ENCODE measurements at regions of chr1 and their contacts with region 1.

Region 1: GRCh38 chr1:112715264-112716053 is at the start of gene PPM1J:
- H3K4me3 ChIP-seq: peak within 1 kb of the TSS; percentile 57
- H3K27ac ChIP-seq: no peak within 1 kb of the TSS; the same call in 1 of the 2 replicates
- H3K4me1 ChIP-seq: no peaks in the 10 kb centered on the region
- CTCF ChIP-seq: no peak

Region 2: GRCh38 chr1:112395821-112396652 is 319.4 kb before region 1 on chr1 and contains the start of gene CTTNBP2NL:
- CTCF ChIA-PET with region 1: interaction called, 18 read pairs
- POLR2A ChIA-PET with region 1: interaction called, 4 read pairs
- H3K4me3 ChIP-seq: peak within 1 kb of the TSS; percentile 71
- H3K27ac ChIP-seq: peak within 1 kb of the TSS; percentile 8; the same call in 1 of the 2 replicates
- H3K4me1 ChIP-seq: peaks cover 16% of the 10 kb centered on the region
- CTCF ChIP-seq: no peak

Region 3: DNA sequence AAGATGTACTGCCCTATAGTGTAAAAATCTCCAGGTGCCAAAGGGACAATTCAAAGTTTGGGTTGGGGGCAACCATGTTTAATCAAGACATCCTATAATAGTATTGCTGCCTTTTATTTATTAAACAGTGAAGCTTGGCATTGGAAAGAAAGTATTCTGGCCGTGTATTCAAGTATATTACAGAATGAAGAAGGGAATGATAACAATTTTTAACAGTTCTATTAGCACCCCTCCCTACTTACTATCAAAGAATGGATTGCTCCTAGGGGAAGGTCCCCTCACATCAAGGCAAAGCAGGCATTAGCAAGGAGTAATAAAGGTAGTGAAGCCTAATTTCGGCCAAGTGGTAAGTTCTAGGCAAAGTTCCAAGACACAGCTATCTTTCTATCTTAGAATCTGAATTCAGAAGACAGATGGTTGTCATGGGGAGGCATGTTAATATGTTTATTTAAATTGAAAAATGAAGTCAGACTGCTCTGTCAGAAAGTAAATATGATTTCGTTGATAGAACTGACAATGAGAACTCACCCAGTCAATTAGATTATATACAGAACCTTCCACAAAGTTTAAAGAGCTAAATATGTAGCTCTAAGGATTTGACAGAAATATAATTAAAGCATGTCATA is 121.1 kb before region 1 on chr1:
- CTCF ChIA-PET with region 1: no interaction called
- POLR2A ChIA-PET with region 1: no interaction called
- H3K4me3 ChIP-seq: no peak overlapping the region
- H3K27ac ChIP-seq: no peak overlapping the region
- H3K4me1 ChIP-seq: no peaks in the 10 kb centered on the region
- CTCF ChIP-seq: no peak

Region 4: GRCh38 chr1:112674439-112674985 is 40.9 kb before region 1 on chr1 and contains the start of gene MOV10:
- CTCF ChIA-PET with region 1: interaction called, 7 read pairs
- POLR2A ChIA-PET with region 1: interaction called, 17 read pairs
- H3K4me3 ChIP-seq: peak within 1 kb of the TSS; percentile 80
- H3K27ac ChIP-seq: peak within 1 kb of the TSS; percentile 85
- H3K4me1 ChIP-seq: peaks cover 5% of the 10 kb centered on the region; the same call in 1 of the 2 replicates
- CTCF ChIP-seq: no peak

Region 5: DNA sequence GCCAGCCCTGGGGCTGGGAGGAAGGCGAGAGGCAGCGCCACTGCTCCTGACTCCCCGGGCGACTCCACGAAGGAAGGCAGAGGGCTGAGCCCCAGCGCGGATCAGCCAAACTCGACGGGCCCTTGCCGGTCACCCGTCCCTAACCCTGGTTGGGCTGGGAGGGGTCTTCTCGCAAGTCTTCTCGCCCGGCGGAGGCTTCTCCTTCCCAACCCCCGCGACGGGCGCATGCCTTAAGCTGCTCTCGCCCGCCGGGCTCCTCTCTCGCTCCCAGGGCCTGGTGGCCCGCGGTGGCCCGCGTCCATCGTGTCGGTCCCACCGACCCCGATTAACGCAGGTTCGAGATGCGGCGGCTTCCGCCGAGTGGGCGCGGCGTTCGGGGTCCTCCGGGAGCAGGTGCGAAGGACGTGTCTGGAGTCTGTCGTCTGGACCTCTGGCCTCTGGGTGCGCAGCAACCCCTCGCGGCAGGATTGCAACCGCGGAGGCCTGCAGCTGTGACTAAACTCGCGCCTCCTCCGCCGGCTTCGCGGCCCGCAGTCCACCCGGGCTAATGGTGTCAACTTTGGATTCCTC is 28.6 kb after region 1 on chr1:
- CTCF ChIA-PET with region 1: interaction called, 12 read pairs
- POLR2A ChIA-PET with region 1: no interaction called
- H3K4me3 ChIP-seq: no peak overlapping the region
- H3K27ac ChIP-seq: no peak overlapping the region
- H3K4me1 ChIP-seq: no peaks in the 10 kb centered on the region
- CTCF ChIP-seq: no peak

Region 6: GRCh38 chr1:112803906-112804762 is 88.7 kb after region 1 on chr1:
- CTCF ChIA-PET with region 1: interaction called, 417 read pairs
- POLR2A ChIA-PET with region 1: interaction called, 7 read pairs
- H3K4me3 ChIP-seq: no peak overlapping the region
- H3K27ac ChIP-seq: no peak overlapping the region
- H3K4me1 ChIP-seq: no peaks in the 10 kb centered on the region
- CTCF ChIP-seq: peak; percentile 92

Region 7: DNA sequence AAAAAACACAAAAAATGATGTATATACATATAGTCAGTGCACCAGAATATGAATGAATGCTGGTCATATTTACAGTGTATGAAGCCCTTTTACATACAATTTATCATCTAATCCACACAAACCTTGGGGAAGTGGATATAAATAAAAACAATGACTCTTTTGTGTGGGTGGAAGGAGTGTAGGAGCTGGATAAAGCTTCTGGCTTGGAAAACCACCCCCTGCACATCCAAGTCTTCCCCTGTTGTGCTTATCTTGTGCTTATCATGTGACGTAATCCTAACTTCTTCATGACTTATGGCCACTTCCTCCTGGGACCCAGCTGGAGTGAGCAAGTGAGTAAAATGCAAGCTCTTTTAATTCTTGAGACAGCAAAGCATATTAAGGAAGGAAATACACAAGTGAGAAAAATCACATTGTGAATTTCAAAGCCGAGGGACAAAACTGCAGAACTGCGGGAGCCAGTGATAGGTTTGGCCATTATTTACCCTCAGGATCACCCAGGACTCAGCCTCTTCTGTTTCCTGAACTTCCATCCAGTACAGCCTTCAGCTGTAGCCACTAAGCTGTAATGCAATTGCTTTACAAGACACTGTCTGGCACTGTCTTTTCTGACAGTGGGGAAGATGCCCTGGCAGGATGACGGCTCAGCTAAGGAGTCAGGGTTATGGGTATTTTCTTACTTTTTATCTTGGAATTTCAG is 103.7 kb after region 1 on chr1:
- CTCF ChIA-PET with region 1: interaction called, 34 read pairs
- POLR2A ChIA-PET with region 1: no interaction called
- H3K4me3 ChIP-seq: no peak overlapping the region
- H3K27ac ChIP-seq: peak overlapping the region; percentile 53; the same call in 1 of the 2 replicates
- H3K4me1 ChIP-seq: 0 out of 2 replicates have a peak, but pooled peaks cover 4% of the 10 kb centered on the region
- CTCF ChIP-seq: no peak

Region 8: GRCh38 chr1:113072757-113073478 is 357.5 kb after region 1 on chr1 and contains the start of gene LRIG2:
- CTCF ChIA-PET with region 1: interaction called, 31 read pairs
- POLR2A ChIA-PET with region 1: no interaction called
- H3K4me3 ChIP-seq: peak within 1 kb of the TSS; percentile 95
- H3K27ac ChIP-seq: peak within 1 kb of the TSS; percentile 70
- H3K4me1 ChIP-seq: 0 out of 2 replicates have a peak, but pooled peaks cover 2% of the 10 kb centered on the region
- CTCF ChIP-seq: peak; percentile 96

Measured in HEK293 (cell line).